Sciatic nerve (tissue), 2 donors: ENCODE measurements at regions of chr6 and their contacts with region 1.

Region 1: DNA sequence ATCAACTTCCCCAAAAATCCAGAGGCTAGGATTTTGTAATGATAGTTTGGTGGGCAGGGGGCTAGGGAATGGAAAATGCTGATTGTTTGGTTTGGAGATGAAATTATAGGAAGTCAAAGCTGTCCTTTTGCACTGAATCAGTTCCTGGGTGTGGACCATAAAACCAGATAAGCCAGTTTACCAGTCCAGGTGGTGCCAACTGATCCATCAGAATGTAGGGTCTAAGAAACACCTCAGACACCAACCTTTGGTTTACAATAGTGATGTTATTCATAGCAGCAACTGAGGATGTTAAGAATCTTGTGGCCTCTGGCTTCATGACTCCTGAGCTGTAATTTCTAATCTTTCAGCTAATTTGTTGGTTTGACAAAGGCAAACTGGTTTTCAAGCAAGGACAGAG is 496.6 kb upstream of the EPHA7 start:
- DNase-seq: no peak
- ATAC-seq: no peak

Region 2: GRCh38 chr6:93894521-93894920 is 21.4 kb before region 1 on chr6:
- intact Hi-C with region 1: loop called (anchors 1 kb)
- DNase-seq: no peak
- ATAC-seq: no peak